Panc1 (cell line): ENCODE measurements at regions of chr2 and their contacts with region 1.

Region 1: GRCh38 chr2:189412330-189412953 is 28.8 kb upstream of the WDR75 start:
- DNase-seq: no peak
- ATAC-seq: peak; percentile 74
- H3K4me3 ChIP-seq: no peak overlapping the region
- H3K27ac ChIP-seq: peak overlapping the region; percentile 72
- H3K4me1 ChIP-seq: peaks cover 14% of the 10 kb centered on the region; the same call in 1 of the 2 replicates
- H3K27me3 ChIP-seq: no peaks in the 10 kb centered on the region
- CTCF ChIP-seq: peak; percentile 65; the same call in 1 of the 2 replicates

Region 2: GRCh38 chr2:188524519-188525113 is 887.8 kb before region 1 on chr2:
- CTCF ChIA-PET with region 1: no interaction called
- POLR2A ChIA-PET with region 1: interaction called, 4 read pairs
- in situ Hi-C with region 1: no loop called
- intact Hi-C with region 1: loop called (anchors 2 kb)
- DNase-seq: no peak
- ATAC-seq: no peak
- H3K4me3 ChIP-seq: no peak overlapping the region
- H3K27ac ChIP-seq: no peak overlapping the region
- H3K4me1 ChIP-seq: no peaks in the 10 kb centered on the region; the same call in 1 of the 2 replicates
- H3K27me3 ChIP-seq: no peaks in the 10 kb centered on the region
- CTCF ChIP-seq: peak; percentile 76; the same call in 1 of the 2 replicates

Region 3: GRCh38 chr2:188983427-188984064 is 428.9 kb before region 1 on chr2:
- CTCF ChIA-PET with region 1: no interaction called
- POLR2A ChIA-PET with region 1: no interaction called
- in situ Hi-C with region 1: no loop called
- intact Hi-C with region 1: loop called (anchors 10 kb)
- DNase-seq: no peak
- ATAC-seq: no peak
- H3K4me3 ChIP-seq: no peak overlapping the region
- H3K27ac ChIP-seq: no peak overlapping the region
- H3K4me1 ChIP-seq: peaks cover 12% of the 10 kb centered on the region; the same call in 1 of the 2 replicates
- H3K27me3 ChIP-seq: no peaks in the 10 kb centered on the region
- CTCF ChIP-seq: peak; percentile 41; the same call in 1 of the 2 replicates

Region 4: DNA sequence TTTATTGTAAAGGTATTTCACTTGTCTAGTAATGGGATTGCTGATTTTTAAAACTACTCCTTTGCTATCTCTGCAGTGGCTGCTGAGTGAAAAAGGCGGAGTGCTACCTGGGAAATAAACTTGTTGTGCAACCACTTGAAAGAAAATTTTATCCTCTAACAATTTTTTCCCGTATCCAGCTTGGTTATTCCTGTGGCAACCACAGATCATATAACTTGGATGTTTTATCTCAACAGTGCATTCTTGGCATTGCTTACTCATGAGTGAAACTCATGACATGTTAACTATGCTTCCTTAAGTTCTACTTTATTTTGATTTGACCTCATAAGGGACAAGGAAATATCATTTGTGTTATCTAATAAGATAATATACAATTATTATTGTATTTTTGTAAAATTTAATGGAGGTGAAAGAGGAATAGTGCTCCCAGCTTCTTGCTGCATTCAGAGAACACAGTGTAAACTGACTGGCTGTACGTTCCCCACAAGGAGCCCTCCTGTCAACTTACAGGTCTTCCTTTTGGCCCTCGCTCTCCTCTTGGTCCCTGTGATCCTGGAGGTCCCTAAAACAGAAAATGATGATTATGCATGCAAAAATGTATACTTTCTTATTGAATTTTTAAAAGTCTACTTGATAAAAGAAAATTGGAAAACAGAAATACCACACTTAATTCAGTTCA is 315.5 kb before region 1 on chr2:
- CTCF ChIA-PET with region 1: no interaction called
- POLR2A ChIA-PET with region 1: no interaction called
- in situ Hi-C with region 1: no loop called
- intact Hi-C with region 1: loop called (anchors 2 kb)
- DNase-seq: peak; percentile 22
- ATAC-seq: peak; percentile 87
- H3K4me3 ChIP-seq: no peak overlapping the region
- H3K27ac ChIP-seq: peak overlapping the region; percentile 66
- H3K4me1 ChIP-seq: peaks cover 19% of the 10 kb centered on the region; the same call in 1 of the 2 replicates
- H3K27me3 ChIP-seq: no peaks in the 10 kb centered on the region
- CTCF ChIP-seq: no peak